ENCODE measurements at regions of chr12 and their contacts with region 1.

Region 1: DNA sequence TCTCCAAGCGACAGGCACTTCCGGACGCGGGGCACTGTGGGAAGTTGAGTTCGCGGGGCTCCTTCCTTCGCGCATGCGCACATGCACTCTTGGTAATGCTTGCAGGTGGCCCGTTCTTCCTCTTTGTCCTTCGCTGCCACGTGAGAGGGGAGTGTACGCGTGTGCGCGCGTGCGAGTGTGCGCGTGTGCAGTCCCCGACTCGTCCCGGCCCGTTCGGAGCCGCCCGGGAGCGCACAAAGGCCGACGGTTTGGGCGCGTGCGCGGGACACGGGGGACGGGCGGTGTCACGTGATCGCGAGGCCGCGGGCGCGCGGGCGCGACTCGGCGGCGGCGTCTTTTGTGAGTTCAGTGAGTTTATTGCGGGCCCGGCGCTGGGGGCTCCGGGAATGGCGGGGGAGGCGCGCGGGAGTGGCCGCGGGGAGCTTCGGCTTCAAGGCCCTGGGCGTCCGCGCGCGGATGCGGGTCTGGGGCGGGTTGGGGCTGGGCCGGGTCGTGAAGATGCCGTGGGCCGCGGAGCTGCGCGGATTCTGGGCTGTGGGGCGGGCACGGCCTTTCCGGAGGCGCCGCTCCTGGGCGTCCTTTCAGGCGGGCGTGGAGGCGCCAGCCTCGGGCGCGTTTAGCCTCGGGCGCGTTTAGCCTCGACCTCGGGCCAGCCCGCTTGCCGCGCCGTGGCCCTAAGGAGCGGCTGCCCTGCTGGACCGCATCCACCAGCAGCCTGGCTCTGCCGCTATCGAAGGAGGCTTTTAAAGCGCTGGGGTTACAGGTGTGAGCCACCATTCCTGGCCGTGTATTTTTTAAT is at the start of gene ZNF84:
- DNase-seq: peak; percentile 99
- total RNA-seq, gene ZNF84: 21.7 to 22.4 TPM

Region 2: DNA sequence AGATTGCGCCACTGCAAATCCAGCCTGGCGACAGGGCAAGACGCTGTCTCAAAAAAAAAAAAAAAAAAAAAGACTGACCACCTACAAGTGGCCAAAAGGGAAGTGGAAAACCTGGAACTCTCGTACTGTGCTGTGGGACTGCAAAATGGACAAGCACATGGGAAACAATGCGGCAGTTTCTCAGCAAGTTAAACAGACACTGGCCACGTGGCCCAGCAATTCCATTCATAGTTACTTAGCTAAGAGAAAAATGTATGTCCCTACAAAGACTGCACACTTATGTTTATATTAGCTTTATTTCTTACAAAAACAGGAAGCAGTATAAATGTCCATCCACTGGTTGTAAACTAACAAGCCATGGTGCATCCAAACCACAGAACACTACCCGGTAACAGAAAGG is 155.6 kb before region 1 on chr12:
- intact Hi-C with region 1: no loop called
- DNase-seq: no peak

Region 3: GRCh38 chr12:132918680-132919079 is 118.7 kb before region 1 on chr12:
- intact Hi-C with region 1: loop called in 1 of 2 experiments (anchors 5 kb)
- DNase-seq: no peak

Measured in posterior vena cava (tissue), 2 donors.